ENCODE measurements at regions of chr6 and their contacts with region 1.

Region 1: GRCh38 chr6:11770546-11771466 is 7.8 kb downstream of the ADTRP start:
- DNase-seq: peak; percentile 100
- H3K4me3 ChIP-seq: peak overlapping the region in 2 of 3 experiments; percentile 17 to 27
- H3K27ac ChIP-seq: peak overlapping the region; percentile 99
- H3K4me1 ChIP-seq: peaks cover 75% of the 10 kb centered on the region
- H3K27me3 ChIP-seq: no peaks in the 10 kb centered on the region
- CTCF ChIP-seq: no peak

Region 2: DNA sequence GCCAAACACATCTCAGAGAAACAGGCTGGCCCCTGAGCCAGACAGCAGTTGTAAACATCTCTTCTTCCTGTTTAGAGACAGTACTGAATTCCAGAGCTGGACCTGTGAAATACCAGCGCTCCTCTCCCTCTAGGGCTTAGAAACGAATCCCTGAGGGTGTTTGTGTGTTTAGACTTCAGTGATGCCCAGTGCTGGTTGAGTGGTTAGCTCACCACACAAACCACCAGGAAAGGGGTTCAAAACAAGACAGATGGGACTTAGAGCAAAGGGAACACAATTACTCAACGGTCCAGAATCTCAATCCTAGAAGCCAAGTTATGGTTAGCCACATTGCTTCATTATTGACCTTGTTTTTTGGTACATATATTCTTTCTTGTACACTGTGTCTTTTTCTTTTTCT is 341.9 kb before region 1 on chr6:
- CTCF ChIA-PET with region 1: no interaction called
- dilution Hi-C with region 1: no loop called
- in situ Hi-C with region 1: no loop called
- intact Hi-C with region 1: no loop called
- DNase-seq: no peak
- H3K4me3 ChIP-seq: no peak overlapping the region
- H3K27ac ChIP-seq: no peak overlapping the region
- H3K4me1 ChIP-seq: peaks cover 33% of the 10 kb centered on the region
- H3K27me3 ChIP-seq: no peaks in the 10 kb centered on the region
- CTCF ChIP-seq: no peak

Region 3: GRCh38 chr6:11585426-11586016 is 185.3 kb before region 1 on chr6:
- CTCF ChIA-PET with region 1: no interaction called
- dilution Hi-C with region 1: no loop called
- in situ Hi-C with region 1: no loop called
- intact Hi-C with region 1: loop called (anchors 10 kb)
- DNase-seq: peak; percentile 31
- H3K4me3 ChIP-seq: no peak overlapping the region
- H3K27ac ChIP-seq: no peak overlapping the region
- H3K4me1 ChIP-seq: no peaks in the 10 kb centered on the region
- H3K27me3 ChIP-seq: peaks cover 3% of the 10 kb centered on the region
- CTCF ChIP-seq: peak; percentile 64 to 66

Region 4: GRCh38 chr6:11621119-11621518 is 149.7 kb before region 1 on chr6:
- CTCF ChIA-PET with region 1: no interaction called
- dilution Hi-C with region 1: no loop called
- in situ Hi-C with region 1: no loop called
- intact Hi-C with region 1: no loop called
- DNase-seq: no peak
- H3K4me3 ChIP-seq: no peak overlapping the region
- H3K27ac ChIP-seq: no peak overlapping the region
- H3K4me1 ChIP-seq: no peaks in the 10 kb centered on the region
- H3K27me3 ChIP-seq: no peaks in the 10 kb centered on the region
- CTCF ChIP-seq: no peak

Region 5: GRCh38 chr6:11685152-11686093 is 85.4 kb before region 1 on chr6:
- CTCF ChIA-PET with region 1: interaction called, 5 read pairs
- dilution Hi-C with region 1: no loop called
- in situ Hi-C with region 1: no loop called
- intact Hi-C with region 1: loop called (anchors 1 kb)
- DNase-seq: peak; percentile 89
- H3K4me3 ChIP-seq: peak overlapping the region in 2 of 3 experiments; percentile 4
- H3K27ac ChIP-seq: peak overlapping the region; percentile 65
- H3K4me1 ChIP-seq: peaks cover 20% of the 10 kb centered on the region
- H3K27me3 ChIP-seq: no peaks in the 10 kb centered on the region
- CTCF ChIP-seq: no peak

Region 6: GRCh38 chr6:11711003-11711983 is 59.5 kb before region 1 on chr6:
- CTCF ChIA-PET with region 1: interaction called, 3 read pairs
- dilution Hi-C with region 1: no loop called
- in situ Hi-C with region 1: no loop called
- intact Hi-C with region 1: loop called (anchors 2 kb)
- DNase-seq: no peak
- H3K4me3 ChIP-seq: no peak overlapping the region
- H3K27ac ChIP-seq: no peak overlapping the region
- H3K4me1 ChIP-seq: no peaks in the 10 kb centered on the region
- H3K27me3 ChIP-seq: no peaks in the 10 kb centered on the region
- CTCF ChIP-seq: no peak

Region 7: GRCh38 chr6:11824986-11825385 is 54.2 kb after region 1 on chr6:
- CTCF ChIA-PET with region 1: no interaction called
- dilution Hi-C with region 1: no loop called
- in situ Hi-C with region 1: no loop called
- intact Hi-C with region 1: no loop called
- DNase-seq: peak; percentile 41
- H3K4me3 ChIP-seq: no peak overlapping the region
- H3K27ac ChIP-seq: no peak overlapping the region
- H3K4me1 ChIP-seq: no peaks in the 10 kb centered on the region
- H3K27me3 ChIP-seq: no peaks in the 10 kb centered on the region
- CTCF ChIP-seq: no peak

Region 8: GRCh38 chr6:11876934-11877433 is 106.2 kb after region 1 on chr6:
- CTCF ChIA-PET with region 1: no interaction called
- dilution Hi-C with region 1: loop called (anchors 5 kb)
- in situ Hi-C with region 1: no loop called
- intact Hi-C with region 1: no loop called
- DNase-seq: no peak
- H3K4me3 ChIP-seq: no peak overlapping the region
- H3K27ac ChIP-seq: no peak overlapping the region
- H3K4me1 ChIP-seq: no peaks in the 10 kb centered on the region
- H3K27me3 ChIP-seq: no peaks in the 10 kb centered on the region
- CTCF ChIP-seq: no peak

Region 9: GRCh38 chr6:12011276-12012076 is 240.7 kb after region 1 on chr6:
- CTCF ChIA-PET with region 1: no interaction called
- dilution Hi-C with region 1: loop called (anchors 5 kb)
- in situ Hi-C with region 1: loop called in 1 of 2 experiments (anchors 25 kb)
- intact Hi-C with region 1: loop called (anchors 1 kb)
- DNase-seq: peak; percentile 96
- H3K4me3 ChIP-seq: peak overlapping the region in 2 of 3 experiments; percentile 73 to 85
- H3K27ac ChIP-seq: peak overlapping the region; percentile 21
- H3K4me1 ChIP-seq: peaks cover 21% of the 10 kb centered on the region
- H3K27me3 ChIP-seq: no peaks in the 10 kb centered on the region
- CTCF ChIP-seq: no peak

Region 10: GRCh38 chr6:12033770-12034169 is 263.0 kb after region 1 on chr6:
- CTCF ChIA-PET with region 1: no interaction called
- dilution Hi-C with region 1: no loop called
- in situ Hi-C with region 1: no loop called
- intact Hi-C with region 1: no loop called
- DNase-seq: peak; percentile 81
- H3K4me3 ChIP-seq: no peak overlapping the region
- H3K27ac ChIP-seq: peak overlapping the region; percentile 9
- H3K4me1 ChIP-seq: peaks cover 40% of the 10 kb centered on the region
- H3K27me3 ChIP-seq: no peaks in the 10 kb centered on the region
- CTCF ChIP-seq: no peak

Measured in mammary epithelial cell (primary cell).